ENCODE measurements at regions of chr6 and their contacts with region 1.

Region 1: DNA sequence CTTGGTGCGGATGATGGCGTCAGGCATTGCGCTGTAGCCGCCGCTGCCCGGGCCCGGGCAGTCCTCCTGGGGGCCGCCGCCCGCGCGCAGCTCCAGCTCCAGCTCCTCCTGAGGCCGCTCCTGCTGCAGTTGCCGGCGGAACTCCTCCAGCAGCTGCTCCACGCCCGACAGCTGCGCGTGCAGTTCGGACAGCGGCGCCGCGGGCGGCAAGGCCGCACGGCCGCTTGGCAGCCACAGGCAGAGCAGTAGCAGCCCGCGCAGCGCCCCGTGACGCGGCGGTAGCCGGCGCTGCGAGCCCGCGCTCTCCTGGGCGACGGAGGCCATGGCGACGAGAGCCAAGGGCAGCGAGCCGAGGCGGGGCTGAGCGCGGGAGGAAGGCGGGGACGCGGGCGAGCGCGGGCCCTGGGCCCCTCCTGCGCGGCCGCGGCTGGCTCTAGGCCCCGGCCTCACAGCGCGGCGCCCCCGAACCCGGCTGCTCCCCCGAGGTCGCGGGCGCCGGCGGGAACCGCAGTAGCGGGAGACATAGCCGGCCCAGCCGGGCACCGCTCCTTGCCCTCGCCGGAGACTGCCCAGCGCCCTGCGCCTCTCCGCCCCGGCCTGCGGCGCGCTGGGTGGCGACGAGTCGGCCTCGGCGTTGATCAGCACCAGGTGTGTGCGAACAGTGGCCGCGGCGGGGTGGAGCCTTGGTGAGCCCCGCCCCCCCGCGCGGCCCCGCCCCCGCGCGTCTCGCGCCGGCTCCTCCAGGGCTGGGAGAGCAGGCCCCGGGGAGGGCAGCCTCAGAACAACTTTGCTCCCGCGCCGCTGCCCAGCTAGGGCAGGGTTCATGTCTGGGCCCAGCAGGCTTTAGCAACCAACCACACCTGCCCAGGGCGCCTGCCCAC is at the start of gene LRP11:
- DNase-seq: no peak
- ATAC-seq: peak; percentile 95
- H3K4me3 ChIP-seq: peak within 1 kb of the TSS; percentile 51
- H3K27ac ChIP-seq: no peak within 1 kb of the TSS
- H3K4me1 ChIP-seq: no peaks in the 10 kb centered on the region; the same call in 1 of the 2 replicates
- H3K27me3 ChIP-seq: peaks cover 5 to 12% of the 10 kb centered on the region in 2 experiments
- CTCF ChIP-seq: no peak
- EP300 ChIP-seq: no peak
- POLR2A ChIP-seq: peak; percentile 24; the same call in 1 of the 2 replicates
- RAD21 ChIP-seq: no peak
- polyA plus RNA-seq, gene LRP11: 0.04 TPM in 1 of 2 experiments, not detected in the other

Region 2: GRCh38 chr6:149723771-149724417 is 140.0 kb before region 1 on chr6:
- CTCF ChIA-PET with region 1: interaction called, 17 read pairs
- POLR2A ChIA-PET with region 1: no interaction called
- RAD21 ChIA-PET with region 1: no interaction called
- SMC1A ChIA-PET with region 1: no interaction called
- in situ Hi-C with region 1: no loop called
- intact Hi-C with region 1: loop called (anchors 10 kb)
- DNase-seq: no peak
- ATAC-seq: peak; percentile 91
- H3K4me3 ChIP-seq: no peak overlapping the region
- H3K27ac ChIP-seq: no peak overlapping the region
- H3K4me1 ChIP-seq: no peaks in the 10 kb centered on the region
- H3K27me3 ChIP-seq: no peaks in the 10 kb centered on the region
- CTCF ChIP-seq: peak; percentile 73 to 76 (median 73)
- EP300 ChIP-seq: no peak
- POLR2A ChIP-seq: no peak
- RAD21 ChIP-seq: peak; percentile 68

Region 3: DNA sequence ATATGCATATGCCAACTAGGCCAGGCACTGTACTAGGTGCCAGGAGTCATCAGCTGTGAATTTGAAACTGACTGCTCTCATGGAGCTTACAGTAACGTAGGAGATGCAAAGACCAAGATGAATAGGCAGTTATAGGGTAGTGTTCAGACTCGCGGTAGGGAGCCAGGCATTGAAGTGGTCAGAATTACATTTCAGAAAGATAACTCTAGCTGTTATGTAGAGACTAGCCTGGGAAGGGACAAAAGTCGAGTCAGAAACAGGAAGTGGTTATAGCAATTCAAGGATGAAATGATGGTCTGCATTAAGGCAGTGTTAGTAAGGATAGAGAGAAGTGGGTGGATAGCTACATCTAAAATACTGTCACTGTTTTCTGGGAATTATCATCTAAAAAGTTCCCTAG is 57.8 kb before region 1 on chr6:
- CTCF ChIA-PET with region 1: no interaction called
- POLR2A ChIA-PET with region 1: no interaction called
- RAD21 ChIA-PET with region 1: no interaction called
- SMC1A ChIA-PET with region 1: no interaction called
- in situ Hi-C with region 1: no loop called
- intact Hi-C with region 1: no loop called
- DNase-seq: no peak
- ATAC-seq: no peak
- H3K4me3 ChIP-seq: no peak overlapping the region
- H3K27ac ChIP-seq: no peak overlapping the region
- H3K4me1 ChIP-seq: no peaks in the 10 kb centered on the region
- H3K27me3 ChIP-seq: no peaks in the 10 kb centered on the region
- CTCF ChIP-seq: no peak
- EP300 ChIP-seq: no peak
- POLR2A ChIP-seq: no peak
- RAD21 ChIP-seq: no peak

Region 4: GRCh38 chr6:149840345-149841075 is 23.4 kb before region 1 on chr6:
- CTCF ChIA-PET with region 1: interaction called, 12 read pairs
- POLR2A ChIA-PET with region 1: no interaction called
- RAD21 ChIA-PET with region 1: no interaction called
- SMC1A ChIA-PET with region 1: interaction called, 8 read pairs
- in situ Hi-C with region 1: no loop called
- intact Hi-C with region 1: no loop called
- DNase-seq: no peak
- ATAC-seq: peak; percentile 86
- H3K4me3 ChIP-seq: no peak overlapping the region
- H3K27ac ChIP-seq: no peak overlapping the region
- H3K4me1 ChIP-seq: no peaks in the 10 kb centered on the region
- H3K27me3 ChIP-seq: peaks cover 0 to 1% of the 10 kb centered on the region in 2 experiments; a peak in 3 of 4 replicates
- CTCF ChIP-seq: peak; percentile 45 to 71 (median 68)
- EP300 ChIP-seq: no peak
- POLR2A ChIP-seq: no peak
- RAD21 ChIP-seq: peak; percentile 53

Region 5: DNA sequence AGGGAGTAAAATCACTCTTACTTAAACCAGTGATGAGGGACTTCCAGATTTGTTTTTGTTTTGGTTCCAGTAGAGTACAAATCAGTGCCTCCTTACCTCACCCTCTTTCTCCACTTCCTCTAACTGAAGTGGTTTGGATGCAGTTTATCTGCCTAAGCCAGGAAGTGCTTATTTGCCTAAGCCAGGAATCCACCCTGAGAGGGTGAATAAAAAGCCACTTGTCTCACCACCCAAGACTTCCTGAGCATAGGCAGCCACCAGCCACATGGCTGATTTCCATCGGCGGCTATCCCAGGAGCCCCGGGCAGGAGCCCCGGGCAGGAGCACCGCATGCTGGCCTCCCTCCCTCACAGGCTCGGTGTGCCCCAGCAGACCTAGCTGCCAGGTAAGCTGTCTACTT is 11.8 kb before region 1 on chr6:
- CTCF ChIA-PET with region 1: no interaction called
- POLR2A ChIA-PET with region 1: no interaction called
- RAD21 ChIA-PET with region 1: no interaction called
- SMC1A ChIA-PET with region 1: no interaction called
- in situ Hi-C with region 1: no loop called
- intact Hi-C with region 1: no loop called
- DNase-seq: peak; percentile 13
- ATAC-seq: peak; percentile 83
- H3K4me3 ChIP-seq: no peak overlapping the region
- H3K27ac ChIP-seq: no peak overlapping the region
- H3K4me1 ChIP-seq: peaks cover 7% of the 10 kb centered on the region
- H3K27me3 ChIP-seq: no peaks in the 10 kb centered on the region; a peak in 3 of 4 replicates
- CTCF ChIP-seq: no peak
- EP300 ChIP-seq: no peak
- POLR2A ChIP-seq: no peak
- RAD21 ChIP-seq: no peak

Measured in GM12878 (cell line).